GM10248 (cell line): ENCODE measurements at regions of chr14 and their contacts with region 1.

Region 1: DNA sequence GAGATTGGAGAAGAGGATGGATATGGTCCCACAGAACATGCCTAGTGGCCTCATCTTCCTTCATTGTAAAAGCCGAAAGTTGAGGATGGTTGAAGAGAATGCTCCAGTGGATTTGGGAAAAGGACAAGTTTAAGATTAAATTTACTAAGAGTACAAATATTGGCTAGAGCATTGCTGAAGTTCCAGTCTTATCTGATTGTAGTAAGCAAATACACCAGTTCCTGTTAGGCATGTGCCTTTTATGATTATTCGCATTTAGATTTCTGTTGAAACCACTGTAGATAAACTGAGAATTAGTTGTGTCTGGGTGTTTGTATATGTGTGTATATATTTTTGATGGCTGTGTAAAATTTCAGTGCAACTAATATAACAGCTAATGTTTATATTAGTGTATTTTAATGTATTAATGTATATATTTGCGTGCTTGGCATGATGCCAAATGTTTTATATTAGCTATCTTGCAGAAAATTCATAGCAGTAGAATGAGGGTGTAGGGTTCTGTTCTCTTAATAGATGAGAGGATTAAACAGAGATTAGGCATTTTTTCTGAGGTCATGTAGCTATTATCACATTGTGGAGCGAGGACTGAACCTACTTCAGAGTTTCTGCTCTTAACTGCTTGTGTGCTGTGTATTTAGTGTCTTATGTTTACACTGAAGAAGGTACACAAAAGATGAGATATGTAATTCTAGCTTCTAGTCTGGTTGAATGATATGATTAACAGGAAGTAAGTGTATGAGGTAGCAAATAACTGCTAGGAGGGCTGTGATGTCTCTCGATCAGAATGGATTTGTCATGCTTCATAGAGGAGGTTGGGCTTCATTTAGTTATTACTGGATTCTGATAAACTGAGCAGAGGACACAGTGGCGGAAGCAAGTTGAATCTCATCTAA is 21.1 kb downstream of the FKBP3 start:
- DNase-seq: no peak
- CTCF ChIP-seq: no peak

Region 2: DNA sequence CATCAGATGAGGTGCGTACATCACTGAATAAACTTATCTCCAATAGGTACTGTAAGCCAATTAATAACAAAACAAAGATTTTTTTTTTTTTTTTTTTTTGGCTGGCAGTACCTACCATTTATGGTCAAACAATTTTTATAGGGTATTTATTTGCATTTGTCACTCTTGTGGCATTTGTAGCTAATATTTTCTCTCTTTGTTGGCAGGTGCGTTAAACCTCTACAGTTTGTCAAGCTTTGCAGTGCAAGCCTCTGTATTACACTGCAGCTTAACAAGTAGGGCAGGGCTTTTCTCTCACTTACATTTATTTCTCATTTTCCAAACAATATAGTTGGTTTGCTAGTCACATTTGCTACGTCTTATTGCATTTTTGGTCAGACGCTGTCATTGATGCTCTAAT is 16.9 kb before region 1 on chr14:
- CTCF ChIA-PET with region 1: interaction called, 15 read pairs
- POLR2A ChIA-PET with region 1: no interaction called
- DNase-seq: no peak
- CTCF ChIP-seq: no peak

Region 3: GRCh38 chr14:45128963-45129629 is 16.0 kb after region 1 on chr14:
- CTCF ChIA-PET with region 1: interaction called, 12 read pairs
- POLR2A ChIA-PET with region 1: no interaction called
- DNase-seq: no peak
- CTCF ChIP-seq: no peak